ENCODE measurements at regions of chr22 and their contacts with region 1.

Region 1: DNA sequence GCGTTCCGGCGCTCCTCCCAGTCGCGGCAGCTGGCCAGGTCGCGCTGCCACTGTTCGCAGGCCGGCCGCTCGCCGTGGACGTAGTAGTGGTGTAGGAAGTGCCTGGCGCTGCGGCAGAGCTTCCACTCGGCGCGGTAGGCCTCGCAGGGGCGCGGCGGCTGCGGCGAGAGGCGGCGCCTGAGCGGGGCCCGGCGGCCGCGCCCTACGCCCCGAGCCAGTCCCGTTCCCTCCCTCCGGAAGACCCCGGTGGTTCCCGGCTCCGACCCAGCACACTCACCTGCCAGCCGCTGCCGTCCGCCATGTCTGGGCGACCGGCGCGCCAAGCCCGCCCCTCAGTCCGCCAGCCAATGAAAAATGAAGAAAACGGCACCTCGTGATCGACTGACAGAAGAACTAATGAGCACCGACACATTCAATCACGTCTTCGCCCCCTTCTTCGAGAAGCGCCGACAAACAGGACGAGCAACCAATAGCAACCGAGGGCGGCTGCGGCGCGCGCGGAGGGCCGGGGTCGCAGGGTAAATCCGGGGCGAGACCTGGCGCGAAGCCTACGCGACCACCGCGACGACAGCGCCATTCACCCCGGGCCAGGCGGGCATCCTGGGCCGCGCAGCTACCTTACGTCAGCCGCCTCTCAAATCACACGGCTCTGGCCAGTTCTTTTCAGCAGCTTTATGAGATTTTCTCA is at the start of gene C22orf39:
- DNase-seq: peak; percentile 80 to 92 (median 90)
- H3K4me3 ChIP-seq: peak within 1 kb of the TSS; percentile 77
- H3K4me3 Mint-ChIP-seq: peak within 1 kb of the TSS; percentile 90 to 96 (median 94)
- H3K27ac ChIP-seq: peak within 1 kb of the TSS; percentile 90
- H3K27ac Mint-ChIP-seq: peak within 1 kb of the TSS; percentile 80 to 99 (median 98)
- H3K4me1 ChIP-seq: peaks cover 31% of the 10 kb centered on the region
- H3K4me1 Mint-ChIP-seq: peaks cover 35 to 52% (median 47%) of the 10 kb centered on the region in 3 donors
- H3K27me3 ChIP-seq: no peaks in the 10 kb centered on the region
- H3K27me3 Mint-ChIP-seq: no peaks in the 10 kb centered on the region
- total RNA-seq, gene C22orf39: 24.4 to 27.7 TPM

Region 2: GRCh38 chr22:19419464-19420178 is 27.9 kb before region 1 on chr22:
- CTCF ChIA-PET with region 1: no interaction called
- POLR2A ChIA-PET with region 1: no interaction called
- DNase-seq: peak; percentile 26 to 77 (median 48)
- H3K4me3 ChIP-seq: no peak overlapping the region
- H3K4me3 Mint-ChIP-seq: peak overlapping the region; percentile 36 to 90 (median 58)
- H3K27ac ChIP-seq: peak overlapping the region; percentile 66
- H3K27ac Mint-ChIP-seq: peak overlapping the region; percentile 67 to 100 (median 96)
- H3K4me1 ChIP-seq: peaks cover 48% of the 10 kb centered on the region
- H3K4me1 Mint-ChIP-seq: peaks cover 68 to 83% (median 81%) of the 10 kb centered on the region in 3 donors
- H3K27me3 ChIP-seq: no peaks in the 10 kb centered on the region
- H3K27me3 Mint-ChIP-seq: no peaks in the 10 kb centered on the region

Region 3: DNA sequence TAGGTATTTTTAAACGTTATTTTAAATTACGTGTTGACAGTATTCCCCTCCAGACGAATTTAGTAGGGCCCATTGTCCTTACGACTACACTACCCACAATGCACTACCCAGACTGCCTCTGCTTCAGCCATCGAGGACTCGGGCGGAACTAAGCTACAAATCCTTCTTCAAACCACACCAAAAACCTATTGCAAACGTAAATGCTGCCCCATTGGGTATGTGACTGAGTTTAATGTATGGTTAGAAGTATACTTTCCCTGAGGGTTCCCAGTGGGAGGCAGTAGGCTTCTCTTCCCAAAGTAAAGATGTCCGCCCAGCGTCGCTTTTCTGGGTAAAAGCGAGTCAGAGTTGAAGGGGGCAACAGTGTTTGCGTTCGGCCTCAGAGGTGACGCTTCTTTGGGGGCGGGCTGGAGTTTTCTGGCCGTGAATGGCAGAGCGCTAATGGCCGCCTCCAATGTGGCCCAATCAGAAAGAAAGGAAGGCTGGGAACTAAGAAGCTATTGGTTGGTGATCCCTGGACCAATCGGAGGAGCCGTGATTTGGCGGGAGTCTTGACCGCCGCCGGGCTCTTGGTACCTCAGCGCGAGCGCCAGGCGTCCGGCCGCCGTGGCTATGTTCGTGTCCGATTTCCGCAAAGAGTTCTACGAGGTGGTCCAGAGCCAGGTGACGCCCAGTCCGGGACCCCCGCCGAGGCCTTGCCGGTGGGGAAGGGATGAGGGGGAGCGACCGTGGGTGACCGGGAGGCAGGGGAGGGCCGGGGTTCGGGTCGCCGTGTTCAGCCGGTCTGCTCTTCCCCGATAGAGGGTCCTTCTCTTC is 32.0 kb after region 1 on chr22 and contains the start of gene CDC45:
- CTCF ChIA-PET with region 1: interaction called, 6 read pairs
- POLR2A ChIA-PET with region 1: interaction called, 11 read pairs
- DNase-seq: peak; percentile 89 to 95 (median 94)
- H3K4me3 ChIP-seq: peak within 1 kb of the TSS; percentile 85
- H3K4me3 Mint-ChIP-seq: peak within 1 kb of the TSS; percentile 88 to 99 (median 93)
- H3K27ac ChIP-seq: peak within 1 kb of the TSS; percentile 100
- H3K27ac Mint-ChIP-seq: peak within 1 kb of the TSS; percentile 99 to 100 (median 100)
- H3K4me1 ChIP-seq: peaks cover 11% of the 10 kb centered on the region
- H3K4me1 Mint-ChIP-seq: peaks cover 29 to 41% (median 38%) of the 10 kb centered on the region in 3 donors
- H3K27me3 ChIP-seq: no peaks in the 10 kb centered on the region
- H3K27me3 Mint-ChIP-seq: no peaks in the 10 kb centered on the region
- total RNA-seq, gene CDC45: 99.0 to 101 TPM

Region 4: GRCh38 chr22:19691721-19692341 is 244.3 kb after region 1 on chr22:
- CTCF ChIA-PET with region 1: no interaction called
- POLR2A ChIA-PET with region 1: no interaction called
- DNase-seq: no peak
- H3K4me3 ChIP-seq: no peak overlapping the region
- H3K4me3 Mint-ChIP-seq: no peak overlapping the region
- H3K27ac ChIP-seq: peak overlapping the region; percentile 50
- H3K27ac Mint-ChIP-seq: no peak overlapping the region
- H3K4me1 ChIP-seq: no peaks in the 10 kb centered on the region
- H3K4me1 Mint-ChIP-seq: no peaks in the 10 kb centered on the region
- H3K27me3 ChIP-seq: peaks cover 4% of the 10 kb centered on the region
- H3K27me3 Mint-ChIP-seq: peaks cover 15% of the 10 kb centered on the region in 2 donors